Psoas muscle (tissue), 8 donors: ENCODE measurements at regions of chr3 and their contacts with region 1.

Region 1: DNA sequence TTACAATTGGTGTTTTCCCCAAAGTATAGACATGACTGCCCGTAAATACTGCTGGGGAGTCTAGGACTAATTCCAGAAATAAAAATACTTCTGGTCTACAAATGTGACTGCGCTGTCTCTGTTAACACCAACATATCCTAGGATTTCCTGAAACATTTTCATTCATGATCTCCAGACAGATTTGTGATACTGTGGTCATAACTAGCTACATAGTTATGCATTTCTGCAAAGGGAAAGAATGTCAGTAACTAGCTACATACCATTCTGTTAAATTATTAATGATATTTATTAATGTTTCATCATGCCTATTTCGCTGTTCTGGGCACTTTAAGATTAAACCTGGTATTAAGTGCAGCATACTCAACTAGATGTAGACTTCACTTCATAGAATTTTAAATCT is 33.3 kb downstream of the SETD5 start:
- DNase-seq: no peak
- ATAC-seq: no peak
- H3K4me3 ChIP-seq: no peak overlapping the region
- H3K27ac ChIP-seq: no peak overlapping the region
- H3K4me1 ChIP-seq: peaks cover 3% of the 10 kb centered on the region
- H3K27me3 ChIP-seq: no peaks in the 10 kb centered on the region
- CTCF ChIP-seq: no peak

Region 2: DNA sequence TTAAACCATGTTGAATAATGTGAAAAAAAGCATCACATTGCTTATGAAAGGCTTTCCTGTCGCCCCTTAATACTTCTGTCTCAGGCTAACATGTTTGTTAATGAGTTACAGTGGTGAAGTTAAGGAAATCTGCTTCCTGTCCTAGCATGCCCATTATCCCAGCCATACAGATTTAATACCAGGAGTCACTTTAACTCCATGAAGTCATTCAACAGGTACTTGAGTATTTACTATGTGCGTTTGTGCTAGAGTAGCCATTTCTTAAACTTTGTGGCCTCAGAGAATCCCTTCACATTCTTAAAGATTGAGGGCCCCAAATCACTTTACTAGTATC is 43.4 kb before region 1 on chr3:
- intact Hi-C with region 1: loop called in 1 of 2 experiments (anchors 5 kb)
- DNase-seq: no peak
- ATAC-seq: no peak
- H3K4me3 ChIP-seq: no peak overlapping the region
- H3K27ac ChIP-seq: no peak overlapping the region
- H3K4me1 ChIP-seq: peaks cover 21% of the 10 kb centered on the region
- H3K27me3 ChIP-seq: no peaks in the 10 kb centered on the region
- CTCF ChIP-seq: no peak

Region 3: DNA sequence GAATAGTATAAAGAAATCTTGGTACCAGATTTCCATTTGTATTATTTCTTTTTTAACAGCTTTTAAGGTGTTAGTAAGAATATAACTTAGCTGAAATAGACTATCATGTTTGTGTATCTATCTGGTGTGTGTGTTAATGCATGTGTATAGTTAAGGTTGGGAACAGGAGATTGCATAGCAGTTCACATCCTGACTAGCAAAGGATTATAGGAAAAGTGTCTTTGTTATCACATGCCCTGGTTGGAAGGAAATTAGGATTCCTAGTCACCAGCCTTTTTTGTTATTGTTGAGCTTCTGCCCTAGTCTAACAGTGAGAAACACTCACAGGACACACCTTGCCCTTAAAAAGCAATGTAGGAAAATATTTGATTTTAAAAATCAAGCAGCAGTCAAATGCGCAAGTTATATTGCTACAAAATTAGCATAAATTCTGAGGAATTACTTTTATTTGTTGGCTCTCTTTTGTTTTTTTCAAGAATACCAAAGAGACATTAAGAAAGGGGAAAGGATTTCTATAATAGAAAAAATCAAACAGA is 24.9 kb after region 1 on chr3:
- intact Hi-C with region 1: no loop called
- DNase-seq: no peak
- ATAC-seq: no peak
- H3K4me3 ChIP-seq: no peak overlapping the region
- H3K27ac ChIP-seq: no peak overlapping the region
- H3K4me1 ChIP-seq: no peaks in the 10 kb centered on the region
- H3K27me3 ChIP-seq: no peaks in the 10 kb centered on the region
- CTCF ChIP-seq: no peak

Region 4: GRCh38 chr3:9468460-9468859 is 37.7 kb after region 1 on chr3:
- intact Hi-C with region 1: loop called in 1 of 2 experiments (anchors 5 kb)
- DNase-seq: no peak
- ATAC-seq: peak in 2 of 4 donors; percentile 20 to 22
- H3K4me3 ChIP-seq: no peak overlapping the region
- H3K27ac ChIP-seq: no peak overlapping the region
- H3K4me1 ChIP-seq: no peaks in the 10 kb centered on the region
- H3K27me3 ChIP-seq: no peaks in the 10 kb centered on the region
- CTCF ChIP-seq: no peak

Region 5: GRCh38 chr3:9476935-9477334 is 46.2 kb after region 1 on chr3:
- intact Hi-C with region 1: loop called in 1 of 2 experiments (anchors 5 kb)
- DNase-seq: no peak
- ATAC-seq: no peak
- H3K4me3 ChIP-seq: no peak overlapping the region
- H3K27ac ChIP-seq: no peak overlapping the region
- H3K4me1 ChIP-seq: no peaks in the 10 kb centered on the region
- H3K27me3 ChIP-seq: no peaks in the 10 kb centered on the region
- CTCF ChIP-seq: no peak